ENCODE measurements at regions of chr2 and their contacts with region 1.

Region 1: DNA sequence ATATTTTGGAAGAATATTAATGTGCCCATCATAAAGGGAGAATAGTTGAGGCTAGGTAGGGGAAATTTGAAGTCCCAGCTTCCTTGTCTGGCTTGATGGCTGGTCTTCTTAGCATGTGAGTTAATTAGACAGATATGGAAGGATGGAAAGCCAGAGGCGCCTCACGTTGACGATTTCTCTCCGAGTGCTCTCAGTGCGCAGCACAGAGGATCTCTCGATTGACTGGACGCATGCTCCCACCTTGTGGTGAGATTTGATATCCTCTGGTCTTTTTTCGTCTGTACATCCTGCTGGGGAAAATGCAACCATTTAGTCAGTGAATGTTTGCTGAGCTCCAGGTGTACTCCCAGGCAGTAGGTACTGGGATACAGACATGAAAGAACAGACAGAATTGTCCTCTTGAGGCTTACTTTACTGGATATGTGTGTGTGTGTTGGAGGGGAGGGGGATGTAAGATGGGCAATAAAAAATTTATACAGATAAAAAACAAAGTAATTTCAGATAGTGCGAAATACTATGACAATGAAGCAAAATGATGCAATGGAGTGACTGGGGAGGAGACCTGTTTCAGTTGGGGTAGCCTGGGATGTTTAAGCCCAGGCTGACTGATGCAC is 66.9 kb upstream of the ZNG1B start:
- DNase-seq: peak; percentile 74
- ATAC-seq: peak; percentile 95

Region 2: DNA sequence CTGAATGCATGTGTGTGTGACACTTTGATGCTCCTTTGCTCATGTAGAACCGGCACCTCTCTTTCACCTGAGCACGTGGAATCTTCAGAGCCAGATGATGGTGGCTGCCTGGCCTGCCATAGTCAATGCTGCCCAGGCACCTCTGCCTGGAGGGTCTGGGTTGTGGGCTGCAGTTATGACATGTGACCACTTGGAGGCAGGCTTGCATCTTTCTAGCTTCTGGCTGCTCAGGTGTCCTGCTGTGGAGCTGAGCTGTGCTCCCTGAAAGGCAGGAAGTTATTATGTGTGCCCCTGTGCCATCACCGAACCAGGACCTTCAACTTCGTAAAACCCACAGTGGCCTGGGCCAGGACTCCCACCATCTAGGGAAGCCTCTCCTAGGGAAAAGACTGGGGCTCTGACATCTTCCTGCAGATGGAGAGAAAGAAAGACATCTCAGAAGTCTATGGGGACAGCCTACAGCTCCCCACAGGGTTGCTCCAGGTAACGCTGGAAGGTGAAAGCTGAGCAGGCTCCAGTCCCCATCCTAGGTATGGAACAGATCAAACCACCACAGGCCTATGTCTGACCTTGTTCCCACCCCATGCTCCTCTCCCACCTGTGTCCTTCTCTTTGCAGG is 166.6 kb before region 1 on chr2:
- intact Hi-C with region 1: loop called (anchors 5 kb)
- DNase-seq: peak; percentile 83
- ATAC-seq: peak; percentile 82

Region 3: GRCh38 chr2:113248997-113249770 is 121.4 kb before region 1 on chr2:
- intact Hi-C with region 1: loop called (anchors 5 kb)
- DNase-seq: peak; percentile 85
- ATAC-seq: peak; percentile 84